Activated CD4-positive, alpha-beta T cell treated with anti-CD3 and anti-CD28 coated beads, Interleukin-2, amount 10 ng/mL, durations not matched to agents 7 days and 5 days (primary cell): ENCODE measurements at regions of chr6 and their contacts with region 1.

Region 1: DNA sequence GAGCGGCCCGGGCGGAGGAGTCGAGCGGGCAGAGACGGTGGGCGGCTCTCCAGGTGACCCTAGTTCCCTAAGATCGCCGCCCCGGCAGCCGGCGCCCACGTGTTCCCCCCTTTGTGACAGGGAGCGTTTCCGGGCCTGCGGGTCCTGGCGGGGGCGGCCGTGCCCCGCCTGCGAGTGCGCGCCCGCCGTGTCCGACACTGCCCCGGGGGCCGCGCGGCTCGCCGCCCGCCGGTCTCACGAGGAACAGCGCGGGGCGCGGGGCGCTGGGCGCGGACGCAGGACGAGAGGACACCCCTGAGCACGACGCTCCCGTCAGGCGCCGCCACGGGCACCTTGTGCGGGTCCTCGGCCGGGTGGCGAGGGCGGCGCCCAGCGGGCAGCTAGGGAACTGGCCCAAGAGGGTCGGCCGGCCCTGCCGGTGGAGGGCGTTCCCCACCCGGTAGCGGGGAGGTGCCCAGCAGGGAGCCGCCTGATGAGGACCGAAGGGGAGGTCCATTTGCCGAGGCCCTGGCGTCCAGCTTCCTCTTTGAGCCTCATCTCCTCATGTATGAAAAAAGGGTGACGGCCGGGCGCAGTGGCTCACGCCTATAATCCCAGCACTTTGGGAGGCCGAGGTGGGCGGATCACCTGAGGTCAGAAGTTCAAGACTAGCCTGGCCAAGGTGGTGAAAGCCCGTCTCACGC is at the start of gene VARS1:
- DNase-seq: peak; percentile 81
- H3K4me3 Mint-ChIP-seq: peak within 1 kb of the TSS; percentile 94
- H3K27ac Mint-ChIP-seq: peak within 1 kb of the TSS; percentile 98
- H3K4me1 Mint-ChIP-seq: peaks cover 56% of the 10 kb centered on the region
- H3K27me3 Mint-ChIP-seq: no peaks in the 10 kb centered on the region
- total RNA-seq, gene VARS1: 85.0 to 100 TPM

Region 2: DNA sequence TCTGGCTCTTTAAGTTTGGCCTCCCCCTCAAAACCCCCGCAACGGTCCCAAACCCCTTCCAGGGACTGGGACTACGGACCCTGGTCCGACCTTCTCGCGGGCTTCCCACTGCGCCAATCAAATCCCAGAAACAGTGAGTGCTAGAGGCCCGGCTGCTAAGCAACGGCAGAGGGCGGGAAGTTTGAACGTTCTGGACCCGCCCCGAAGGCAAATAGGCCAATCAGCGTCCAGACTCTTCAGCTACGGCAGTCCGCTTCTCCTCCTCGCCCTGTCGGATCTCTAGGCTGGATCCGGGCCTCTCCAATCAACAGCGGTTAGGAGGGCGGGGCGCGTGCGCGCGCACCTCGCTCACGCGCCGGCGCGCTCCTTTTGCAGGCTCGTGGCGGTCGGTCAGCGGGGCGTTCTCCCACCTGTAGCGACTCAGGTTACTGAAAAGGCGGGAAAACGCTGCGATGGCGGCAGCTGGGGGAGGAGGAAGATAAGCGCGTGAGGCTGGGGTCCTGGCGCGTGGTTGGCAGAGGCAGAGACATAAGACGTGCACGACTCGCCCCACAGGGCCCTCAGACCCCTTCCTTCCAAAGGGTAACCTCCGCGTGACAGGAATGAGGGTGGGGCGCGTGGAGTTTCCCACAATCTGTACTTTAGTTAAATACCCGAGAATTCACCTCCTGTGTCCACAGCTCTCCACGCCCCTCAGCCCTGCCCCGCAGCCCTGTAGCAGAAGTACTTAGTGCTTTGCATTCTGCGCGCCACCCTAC is 55.9 kb before region 1 on chr6 and contains the start of gene MSH5:
- CTCF ChIA-PET with region 1: interaction called, 21 read pairs
- POLR2A ChIA-PET with region 1: interaction called, 3 read pairs
- DNase-seq: peak; percentile 98
- H3K4me3 Mint-ChIP-seq: peak within 1 kb of the TSS; percentile 94
- H3K27ac Mint-ChIP-seq: peak within 1 kb of the TSS; percentile 96
- H3K4me1 Mint-ChIP-seq: peaks cover 56% of the 10 kb centered on the region
- H3K27me3 Mint-ChIP-seq: no peaks in the 10 kb centered on the region
- total RNA-seq, gene MSH5: 56.1 to 58.0 TPM

Region 3: GRCh38 chr6:31776989-31777666 is 18.6 kb before region 1 on chr6 and contains the start of gene VWA7:
- CTCF ChIA-PET with region 1: interaction called, 13 read pairs
- POLR2A ChIA-PET with region 1: no interaction called
- DNase-seq: peak; percentile 64
- H3K4me3 Mint-ChIP-seq: peak within 1 kb of the TSS; percentile 51
- H3K27ac Mint-ChIP-seq: peak within 1 kb of the TSS; percentile 85
- H3K4me1 Mint-ChIP-seq: peaks cover 43% of the 10 kb centered on the region
- H3K27me3 Mint-ChIP-seq: no peaks in the 10 kb centered on the region
- total RNA-seq, gene VWA7: 5.2 to 5.4 TPM

Region 4: GRCh38 chr6:31806465-31807272 is 10.9 kb after region 1 on chr6 and contains the start of gene LSM2:
- CTCF ChIA-PET with region 1: interaction called, 29 read pairs
- POLR2A ChIA-PET with region 1: interaction called, 4 read pairs
- DNase-seq: peak; percentile 97
- H3K4me3 Mint-ChIP-seq: peak within 1 kb of the TSS; percentile 94
- H3K27ac Mint-ChIP-seq: peak within 1 kb of the TSS; percentile 91
- H3K4me1 Mint-ChIP-seq: peaks cover 33% of the 10 kb centered on the region
- H3K27me3 Mint-ChIP-seq: no peaks in the 10 kb centered on the region
- total RNA-seq, gene LSM2: 103 to 109 TPM